Activated CD8-positive, alpha-beta T cell treated with anti-CD3 and anti-CD28 coated beads, Interleukin-2, amount 10 ng/mL, durations not matched to agents 7 days and 5 days (primary cell): ENCODE measurements at regions of chr3 and their contacts with region 1.

Region 1: GRCh38 chr3:28317438-28318022 is 31.0 kb upstream of the ZCWPW2 start:
- DNase-seq: peak; percentile 62
- ATAC-seq: peak; percentile 87
- H3K4me3 Mint-ChIP-seq: no peak overlapping the region
- H3K27ac Mint-ChIP-seq: no peak overlapping the region
- H3K4me1 Mint-ChIP-seq: peaks cover 14% of the 10 kb centered on the region
- H3K27me3 Mint-ChIP-seq: no peaks in the 10 kb centered on the region

Region 2: DNA sequence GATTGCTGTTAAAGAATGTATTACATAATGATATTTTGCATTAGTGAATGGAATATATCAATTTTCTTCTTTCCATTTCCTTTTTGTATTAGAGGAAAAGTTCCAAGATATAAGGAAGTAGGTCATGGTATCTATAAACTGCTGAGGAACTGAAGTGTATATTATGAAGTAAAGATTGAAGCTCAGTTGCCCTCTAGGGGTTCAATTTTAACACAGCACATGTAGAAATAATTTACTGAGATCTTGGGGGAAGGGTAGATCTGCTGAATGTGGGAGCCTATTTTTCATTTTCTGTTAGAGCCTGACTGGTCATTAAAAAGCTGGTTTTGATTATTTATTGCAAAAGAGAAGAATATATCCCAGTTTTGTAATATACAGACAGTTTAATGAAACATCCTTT is 30.9 kb before region 1 on chr3:
- CTCF ChIA-PET with region 1: interaction called, 11 read pairs
- POLR2A ChIA-PET with region 1: no interaction called
- DNase-seq: no peak
- ATAC-seq: peak; percentile 60
- H3K4me3 Mint-ChIP-seq: no peak overlapping the region
- H3K27ac Mint-ChIP-seq: no peak overlapping the region
- H3K4me1 Mint-ChIP-seq: peaks cover 3% of the 10 kb centered on the region
- H3K27me3 Mint-ChIP-seq: no peaks in the 10 kb centered on the region

Region 3: GRCh38 chr3:28328188-28329151 is 10.9 kb after region 1 on chr3:
- CTCF ChIA-PET with region 1: interaction called, 21 read pairs
- POLR2A ChIA-PET with region 1: no interaction called
- DNase-seq: no peak
- ATAC-seq: no peak
- H3K4me3 Mint-ChIP-seq: no peak overlapping the region
- H3K27ac Mint-ChIP-seq: no peak overlapping the region
- H3K4me1 Mint-ChIP-seq: peaks cover 33% of the 10 kb centered on the region
- H3K27me3 Mint-ChIP-seq: no peaks in the 10 kb centered on the region